HepG2 (cell line): ENCODE measurements at regions of chr1 and their contacts with region 1.

Region 1: DNA sequence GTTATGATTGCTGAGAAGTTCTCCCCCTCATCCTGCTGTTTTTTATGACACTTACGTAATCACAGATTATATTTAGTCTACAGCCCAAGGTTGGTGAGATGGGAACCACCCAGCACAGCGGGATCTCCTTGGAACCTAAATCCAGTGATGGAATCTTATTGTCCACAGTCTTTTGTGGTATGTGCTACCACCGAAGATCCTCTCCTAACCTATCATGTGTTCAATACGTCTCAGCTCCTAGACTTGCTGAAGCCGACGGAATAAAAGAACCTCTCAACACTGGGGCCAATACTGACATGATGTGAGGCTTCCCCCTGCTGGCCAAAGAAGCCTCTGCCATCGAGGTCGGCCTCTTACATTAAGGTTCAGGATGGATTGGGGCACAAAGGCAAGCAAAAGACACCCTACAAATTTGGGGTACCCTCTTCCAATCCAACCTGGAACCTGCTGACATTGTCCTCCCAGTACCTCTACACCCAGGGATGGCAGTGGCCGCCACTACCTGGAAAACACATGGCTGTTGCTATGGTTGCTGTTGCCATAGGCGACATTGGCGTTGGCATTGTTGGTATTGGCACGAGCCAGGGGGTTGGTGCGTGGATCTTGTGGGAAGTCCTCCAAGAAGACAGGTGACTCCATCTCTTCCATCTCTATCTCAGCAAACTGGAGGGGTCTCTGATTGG is 19.4 kb upstream of the KIF21B start:
- DNase-seq: peak; percentile 29
- ATAC-seq: peak; percentile 85
- H3K4me3 ChIP-seq: no peak overlapping the region
- H3K27ac ChIP-seq: no peak overlapping the region
- H3K4me1 ChIP-seq: 0 out of 2 replicates have a peak, but pooled peaks cover 4% of the 10 kb centered on the region
- H3K27me3 ChIP-seq: peaks cover 0 to 5% of the 10 kb centered on the region in 2 experiments; a peak in 2 of 5 replicates
- CTCF ChIP-seq: peak; percentile 89
- EP300 ChIP-seq: no peak
- POLR2A ChIP-seq: no peak
- RAD21 ChIP-seq: peak; percentile 71; the same call in 1 of the 2 replicates

Region 2: GRCh38 chr1:200558866-200559459 is 484.0 kb before region 1 on chr1:
- CTCF ChIA-PET with region 1: interaction called, 4 read pairs
- POLR2A ChIA-PET with region 1: no interaction called
- in situ Hi-C with region 1: no loop called
- intact Hi-C with region 1: loop called (anchors 2 kb)
- DNase-seq: peak; percentile 29
- ATAC-seq: peak; percentile 67
- H3K4me3 ChIP-seq: no peak overlapping the region
- H3K27ac ChIP-seq: no peak overlapping the region
- H3K4me1 ChIP-seq: no peaks in the 10 kb centered on the region
- H3K27me3 ChIP-seq: no peaks in the 10 kb centered on the region
- CTCF ChIP-seq: peak; percentile 66
- EP300 ChIP-seq: no peak
- POLR2A ChIP-seq: no peak
- RAD21 ChIP-seq: peak; percentile 41

Region 3: DNA sequence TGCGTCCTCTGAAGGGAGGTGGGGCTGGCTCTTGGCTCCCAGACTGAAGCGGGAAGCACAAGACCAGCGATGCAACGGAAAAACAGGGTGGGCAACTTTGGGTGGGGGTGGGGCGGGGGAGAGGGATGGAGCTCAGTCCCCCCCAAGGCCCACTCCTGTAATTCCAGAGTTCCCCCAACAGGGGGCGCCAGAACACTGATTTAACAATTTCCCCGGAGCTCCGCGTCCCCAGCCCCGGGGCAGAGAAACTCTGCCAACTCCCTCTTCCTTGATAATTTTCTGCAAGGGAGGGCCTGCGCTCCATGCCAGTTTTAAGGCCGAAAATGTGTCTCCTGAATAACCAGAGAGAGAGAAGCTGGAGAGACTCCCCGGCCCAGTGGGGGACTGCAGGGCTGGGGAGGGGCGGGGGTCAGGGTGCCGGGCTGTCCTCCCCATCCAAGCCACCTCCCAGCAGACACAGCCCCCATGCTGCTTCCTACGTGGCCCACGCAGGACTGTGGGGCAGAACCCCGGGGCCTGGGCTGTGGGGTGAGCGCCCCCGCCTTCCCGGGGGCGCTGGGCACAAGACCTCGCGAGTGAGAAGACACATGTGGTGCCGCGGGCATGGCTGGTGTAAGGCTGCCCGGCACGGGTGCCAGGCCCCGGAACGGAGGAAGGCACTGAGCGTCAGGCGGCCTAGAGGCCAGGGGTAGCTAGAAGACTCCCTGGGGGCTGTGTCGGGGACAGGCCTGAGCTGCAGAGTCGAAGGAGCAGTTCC is 70.8 kb before region 1 on chr1:
- CTCF ChIA-PET with region 1: interaction called, 24 read pairs
- POLR2A ChIA-PET with region 1: no interaction called
- in situ Hi-C with region 1: loop called (anchors 5 kb)
- intact Hi-C with region 1: loop called (anchors 1 kb)
- DNase-seq: peak; percentile 30
- ATAC-seq: peak; percentile 12; the same call in 2 of the 3 replicates
- H3K4me3 ChIP-seq: no peak overlapping the region
- H3K27ac ChIP-seq: no peak overlapping the region
- H3K4me1 ChIP-seq: 0 out of 2 replicates have a peak, but pooled peaks cover 19% of the 10 kb centered on the region
- H3K27me3 ChIP-seq: peaks cover 2 to 6% of the 10 kb centered on the region in 2 experiments; a peak in 4 of 5 replicates
- CTCF ChIP-seq: peak; percentile 67
- EP300 ChIP-seq: no peak
- POLR2A ChIP-seq: no peak
- RAD21 ChIP-seq: 0 out of 2 replicates have a peak, but pooled peaks have one; percentile 27

Region 4: GRCh38 chr1:200979574-200980451 is 63.1 kb before region 1 on chr1:
- CTCF ChIA-PET with region 1: interaction called, 24 read pairs
- POLR2A ChIA-PET with region 1: no interaction called
- in situ Hi-C with region 1: loop called (anchors 5 kb)
- intact Hi-C with region 1: no loop called
- DNase-seq: peak; percentile 24
- ATAC-seq: peak; percentile 86
- H3K4me3 ChIP-seq: no peak overlapping the region
- H3K27ac ChIP-seq: no peak overlapping the region
- H3K4me1 ChIP-seq: no peaks in the 10 kb centered on the region
- H3K27me3 ChIP-seq: no peaks in the 10 kb centered on the region
- CTCF ChIP-seq: peak; percentile 78
- EP300 ChIP-seq: no peak
- POLR2A ChIP-seq: no peak
- RAD21 ChIP-seq: peak; percentile 56

Region 5: DNA sequence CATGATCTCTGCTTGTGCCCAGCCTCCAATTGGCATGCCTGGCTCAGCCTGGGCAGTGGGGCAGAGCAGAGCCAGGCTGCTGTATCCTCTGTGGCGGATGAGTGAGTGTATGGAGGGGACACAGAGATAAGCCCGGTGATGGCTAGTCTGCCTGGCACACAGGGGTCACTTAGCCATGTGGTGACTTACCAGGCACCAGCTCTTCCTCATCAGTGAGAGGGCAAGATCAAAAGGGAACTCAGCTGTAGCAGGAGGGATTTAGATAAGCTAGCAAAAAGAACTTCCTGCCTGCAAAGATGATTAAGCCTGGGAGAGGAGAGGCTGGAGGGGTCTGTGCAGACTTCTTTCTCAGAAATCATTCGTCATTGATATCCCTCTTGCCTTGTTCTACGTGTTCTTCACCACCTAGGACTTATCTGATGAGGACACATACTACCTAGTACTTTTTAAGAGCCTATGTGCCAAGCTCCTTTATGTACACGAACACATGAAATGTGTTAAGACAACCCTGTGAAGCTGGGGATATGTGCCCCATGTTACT is 27.3 kb before region 1 on chr1:
- CTCF ChIA-PET with region 1: no interaction called
- POLR2A ChIA-PET with region 1: no interaction called
- in situ Hi-C with region 1: no loop called
- intact Hi-C with region 1: no loop called
- DNase-seq: no peak
- ATAC-seq: no peak
- H3K4me3 ChIP-seq: no peak overlapping the region
- H3K27ac ChIP-seq: no peak overlapping the region
- H3K4me1 ChIP-seq: peaks cover 38% of the 10 kb centered on the region
- H3K27me3 ChIP-seq: peaks cover 6 to 36% of the 10 kb centered on the region in 2 experiments; a peak in 4 of 5 replicates
- CTCF ChIP-seq: no peak
- EP300 ChIP-seq: no peak
- POLR2A ChIP-seq: no peak
- RAD21 ChIP-seq: no peak

Region 6: DNA sequence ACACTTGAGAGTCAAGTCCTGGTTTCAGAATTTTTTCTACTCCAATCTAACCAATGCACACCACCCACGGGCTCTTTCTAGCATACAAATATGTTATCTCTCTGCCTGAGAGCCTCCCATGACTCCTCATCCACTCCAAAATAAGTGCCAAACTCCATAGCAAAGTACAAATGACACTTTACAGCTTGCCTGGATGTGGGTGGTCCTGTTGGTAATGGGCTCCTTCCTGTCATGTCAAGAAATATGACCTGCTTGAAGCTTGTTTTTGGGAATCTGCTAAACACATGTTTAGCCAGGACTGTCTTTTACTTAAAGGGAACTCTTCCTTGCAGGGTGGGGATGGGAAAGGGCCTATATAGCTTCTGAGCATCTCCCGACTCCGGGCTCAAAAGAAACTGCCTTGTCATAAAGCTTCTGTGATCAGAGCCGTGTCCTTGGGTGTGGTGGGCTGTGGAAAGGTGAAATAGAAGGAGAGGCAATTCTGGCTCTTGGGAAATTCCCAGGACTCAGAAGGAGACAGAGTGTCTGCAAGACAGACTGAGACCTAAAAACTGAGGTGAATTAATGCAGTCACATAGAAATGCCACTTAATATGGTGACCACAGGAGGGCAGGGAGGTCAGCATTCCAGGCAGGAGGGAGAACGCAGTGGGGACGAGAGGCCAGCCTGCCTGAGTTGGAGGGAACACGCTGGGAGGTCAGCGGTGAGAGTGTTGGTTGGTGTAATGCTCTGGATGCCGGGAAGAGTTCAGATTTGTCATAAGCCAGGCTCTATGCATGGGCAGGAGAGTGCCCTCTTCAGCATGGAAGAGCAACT is 141.6 kb after region 1 on chr1:
- CTCF ChIA-PET with region 1: no interaction called
- POLR2A ChIA-PET with region 1: no interaction called
- in situ Hi-C with region 1: no loop called
- intact Hi-C with region 1: no loop called
- DNase-seq: peak; percentile 58
- ATAC-seq: peak; percentile 98
- H3K4me3 ChIP-seq: no peak overlapping the region
- H3K27ac ChIP-seq: no peak overlapping the region
- H3K4me1 ChIP-seq: peaks cover 17% of the 10 kb centered on the region
- H3K27me3 ChIP-seq: peaks cover 3 to 54% of the 10 kb centered on the region in 2 experiments; a peak in 4 of 5 replicates
- CTCF ChIP-seq: peak; percentile 74
- EP300 ChIP-seq: no peak
- POLR2A ChIP-seq: no peak
- RAD21 ChIP-seq: peak; percentile 53; the same call in 1 of the 2 replicates